ENCODE measurements at regions of chr15 and their contacts with region 1.

Region 1: GRCh38 chr15:61169904-61170695 is 59.0 kb downstream of the RORA start:
- DNase-seq: no peak
- ATAC-seq: peak; percentile 13
- H3K4me3 Mint-ChIP-seq: peak overlapping the region; percentile 8
- H3K27ac Mint-ChIP-seq: peak overlapping the region; percentile 98
- H3K4me1 Mint-ChIP-seq: peaks cover 72% of the 10 kb centered on the region
- H3K27me3 Mint-ChIP-seq: no peaks in the 10 kb centered on the region
- CTCF ChIP-seq: no peak

Region 2: GRCh38 chr15:61227269-61227949 is 57.3 kb after region 1 on chr15:
- CTCF ChIA-PET with region 1: interaction called, 8 read pairs
- POLR2A ChIA-PET with region 1: interaction called, 11 read pairs
- DNase-seq: peak; percentile 38
- ATAC-seq: no peak; the same call in 1 of the 2 replicates
- H3K4me3 Mint-ChIP-seq: peak overlapping the region; percentile 86
- H3K27ac Mint-ChIP-seq: no peak overlapping the region
- H3K4me1 Mint-ChIP-seq: peaks cover 31% of the 10 kb centered on the region
- H3K27me3 Mint-ChIP-seq: peaks cover 5% of the 10 kb centered on the region
- CTCF ChIP-seq: no peak

Region 3: GRCh38 chr15:61621146-61621545 is 451.0 kb after region 1 on chr15:
- CTCF ChIA-PET with region 1: interaction called, 15 read pairs
- POLR2A ChIA-PET with region 1: no interaction called
- DNase-seq: peak; percentile 57
- ATAC-seq: peak; percentile 95
- H3K4me3 Mint-ChIP-seq: no peak overlapping the region
- H3K27ac Mint-ChIP-seq: no peak overlapping the region
- H3K4me1 Mint-ChIP-seq: peaks cover 10% of the 10 kb centered on the region
- H3K27me3 Mint-ChIP-seq: no peaks in the 10 kb centered on the region
- CTCF ChIP-seq: peak; percentile 65